Activated T-helper 1 cell treated with anti-CD3 and anti-CD28 coated beads, Interleukin-12 subunit alpha, Interleukin-12 subunit beta, Interleukin-2, Interleukin-4 antibody, amounts not matched to agents 30 ng/mL and 10 ng/mL and 1 ng/mL, durations not matched to agents 14 hours and 24 hours and 36 hours (primary cell): ENCODE measurements at regions of chr7 and their contacts with region 1.

Region 1: DNA sequence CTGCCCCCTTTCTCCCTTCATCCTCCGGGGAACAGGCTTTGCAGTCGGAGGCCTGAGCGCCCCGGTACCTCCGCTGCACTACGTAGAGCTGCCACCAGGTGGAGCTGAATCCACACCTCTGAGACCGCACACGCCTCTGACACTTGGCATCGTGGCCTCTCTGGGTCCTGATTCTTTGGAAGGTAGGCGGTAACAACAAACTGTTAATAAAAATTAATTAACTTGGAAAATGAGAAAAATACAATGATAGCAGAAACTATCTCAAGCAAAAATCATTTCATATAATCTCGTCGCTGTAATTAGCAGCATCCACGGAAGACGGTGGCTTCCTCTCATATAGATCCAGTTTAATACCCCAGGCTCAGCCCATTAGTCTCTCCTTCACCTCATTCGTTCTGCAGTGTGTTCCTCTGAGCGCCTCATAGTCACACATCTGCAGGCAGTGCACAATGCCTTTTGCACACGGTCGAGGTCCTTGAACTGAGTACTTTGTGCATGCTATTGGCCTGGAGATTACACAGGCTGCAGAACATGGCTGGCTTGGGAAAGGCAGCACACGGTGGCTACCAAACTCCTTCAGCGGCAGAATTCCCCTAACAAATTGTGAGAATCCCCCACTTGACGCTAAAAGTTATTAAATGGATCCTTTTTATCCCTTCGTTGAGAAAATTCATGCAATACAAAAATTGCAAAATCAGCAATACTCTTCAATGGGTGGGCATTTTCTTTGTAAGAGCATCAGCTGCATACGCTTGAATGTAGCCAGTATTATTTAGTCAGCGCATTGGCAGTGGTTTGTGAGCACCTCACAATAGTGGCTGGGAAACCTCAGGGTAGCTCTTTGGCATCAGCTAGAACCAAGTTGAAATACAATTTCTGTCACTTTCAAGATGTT is 18.7 kb downstream of the OR9A2 start:
- DNase-seq: peak; percentile 68
- H3K4me3 Mint-ChIP-seq: no peak overlapping the region
- H3K27ac Mint-ChIP-seq: no peak overlapping the region
- H3K4me1 Mint-ChIP-seq: peaks cover 5% of the 10 kb centered on the region
- H3K27me3 Mint-ChIP-seq: peaks cover 12% of the 10 kb centered on the region

Region 2: DNA sequence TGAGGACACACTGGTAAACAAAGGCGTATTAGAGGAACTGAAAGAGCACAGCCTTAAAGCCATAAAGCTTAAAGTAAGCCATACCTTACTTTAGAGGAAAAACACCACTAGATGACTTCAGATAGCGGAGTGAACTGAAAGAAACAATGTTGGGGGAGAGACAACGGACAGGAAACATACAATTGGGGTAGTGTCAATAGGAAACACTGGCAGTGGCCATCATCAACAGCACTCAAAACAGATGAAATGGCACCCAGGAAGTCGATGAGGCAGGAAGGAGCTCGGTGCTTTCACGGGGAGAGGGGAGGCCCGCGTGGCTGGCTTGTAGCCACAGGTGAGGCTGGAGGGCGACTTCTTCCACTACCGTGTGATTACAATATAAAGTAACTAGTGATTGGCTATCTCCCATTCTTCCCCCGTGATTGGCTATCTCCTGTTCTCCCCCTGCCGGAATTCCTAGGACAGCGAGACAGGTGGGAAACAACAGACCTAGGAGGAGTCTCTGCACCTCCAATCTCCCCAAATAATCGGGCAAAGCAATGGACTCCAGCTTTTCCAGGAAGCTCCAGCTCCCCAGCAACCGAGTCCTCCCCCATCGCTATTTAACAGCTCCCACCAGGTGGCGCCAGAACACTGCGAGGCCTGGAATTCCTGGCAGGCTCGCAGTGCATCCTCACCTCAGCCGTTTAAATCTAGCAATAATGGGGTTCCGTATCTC is 1032.3 kb before region 1 on chr7:
- intact Hi-C with region 1: loop called (anchors 5 kb)
- DNase-seq: peak; percentile 34
- H3K4me3 Mint-ChIP-seq: peak overlapping the region; percentile 73
- H3K27ac Mint-ChIP-seq: no peak overlapping the region
- H3K4me1 Mint-ChIP-seq: peaks cover 12% of the 10 kb centered on the region
- H3K27me3 Mint-ChIP-seq: no peaks in the 10 kb centered on the region

Region 3: GRCh38 chr7:142385491-142386340 is 622.5 kb before region 1 on chr7:
- intact Hi-C with region 1: loop called (anchors 2 kb)
- DNase-seq: peak; percentile 27
- H3K4me3 Mint-ChIP-seq: peak overlapping the region; percentile 65
- H3K27ac Mint-ChIP-seq: peak overlapping the region; percentile 2
- H3K4me1 Mint-ChIP-seq: peaks cover 21% of the 10 kb centered on the region
- H3K27me3 Mint-ChIP-seq: peaks cover 2% of the 10 kb centered on the region

Region 4: GRCh38 chr7:142535123-142535779 is 473.0 kb before region 1 on chr7:
- intact Hi-C with region 1: loop called (anchors 1 kb)
- DNase-seq: peak; percentile 58
- H3K4me3 Mint-ChIP-seq: peak overlapping the region; percentile 59
- H3K27ac Mint-ChIP-seq: peak overlapping the region; percentile 62
- H3K4me1 Mint-ChIP-seq: peaks cover 29% of the 10 kb centered on the region
- H3K27me3 Mint-ChIP-seq: no peaks in the 10 kb centered on the region

Region 5: GRCh38 chr7:142853739-142854371 is 154.4 kb before region 1 on chr7:
- intact Hi-C with region 1: loop called (anchors 1 kb)
- DNase-seq: peak; percentile 50
- H3K4me3 Mint-ChIP-seq: peak overlapping the region; percentile 96
- H3K27ac Mint-ChIP-seq: peak overlapping the region; percentile 82
- H3K4me1 Mint-ChIP-seq: peaks cover 7% of the 10 kb centered on the region
- H3K27me3 Mint-ChIP-seq: peaks cover 25% of the 10 kb centered on the region

Region 6: DNA sequence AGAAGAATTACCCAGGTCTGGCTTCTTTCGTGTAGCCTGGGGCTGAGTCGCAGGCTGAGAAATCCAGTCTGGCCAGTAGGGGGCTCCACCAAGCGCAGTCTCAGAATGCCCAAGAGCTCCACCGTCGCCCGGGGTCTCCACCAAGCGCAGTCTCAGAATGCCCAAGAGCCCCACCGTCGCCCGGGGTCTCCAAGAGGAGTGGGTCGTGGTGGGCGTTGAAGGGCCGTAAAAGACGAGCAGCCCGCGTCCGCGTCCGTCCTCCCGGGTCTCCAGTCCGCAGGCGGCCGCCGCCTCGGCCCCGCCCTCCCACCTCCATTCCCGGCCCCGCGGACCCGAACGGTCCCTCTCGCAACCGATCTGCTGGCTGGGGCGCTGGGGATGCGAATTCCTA is 372.0 kb after region 1 on chr7:
- intact Hi-C with region 1: loop called (anchors 1 kb)
- DNase-seq: peak; percentile 76
- H3K4me3 Mint-ChIP-seq: peak overlapping the region; percentile 85
- H3K27ac Mint-ChIP-seq: peak overlapping the region; percentile 70
- H3K4me1 Mint-ChIP-seq: peaks cover 46% of the 10 kb centered on the region
- H3K27me3 Mint-ChIP-seq: no peaks in the 10 kb centered on the region

Region 7: GRCh38 chr7:144407266-144407931 is 1399.1 kb after region 1 on chr7:
- intact Hi-C with region 1: no loop called
- DNase-seq: no peak
- H3K4me3 Mint-ChIP-seq: no peak overlapping the region
- H3K27ac Mint-ChIP-seq: no peak overlapping the region
- H3K4me1 Mint-ChIP-seq: no peaks in the 10 kb centered on the region
- H3K27me3 Mint-ChIP-seq: peaks cover 9% of the 10 kb centered on the region